Naive thymus-derived CD8-positive, alpha-beta T cell (primary cell): ENCODE measurements at regions of chr16 and their contacts with region 1.

Region 1: GRCh38 chr16:68237243-68238028 is 1.5 kb upstream of the ESRP2 start:
- DNase-seq: peak; percentile 70 to 90 (median 80)
- ATAC-seq: peak; percentile 70 to 71
- H3K4me3 Mint-ChIP-seq: peak overlapping the region; percentile 88 to 99 (median 96)
- H3K27ac Mint-ChIP-seq: peak overlapping the region; percentile 82 to 94 (median 92)
- H3K4me1 Mint-ChIP-seq: peaks cover 18 to 43% (median 39%) of the 10 kb centered on the region in 4 donors
- H3K27me3 Mint-ChIP-seq: no peaks in the 10 kb centered on the region

Region 2: GRCh38 chr16:68079626-68080344 is 157.7 kb before region 1 on chr16:
- POLR2A ChIA-PET with region 1: interaction called, 10 read pairs
- DNase-seq: peak; percentile 32 to 85 (median 68)
- ATAC-seq: peak; percentile 46 to 61
- H3K4me3 Mint-ChIP-seq: peak overlapping the region; percentile 66 to 86 (median 75)
- H3K27ac Mint-ChIP-seq: peak overlapping the region; percentile 86 to 97 (median 95)
- H3K4me1 Mint-ChIP-seq: peaks cover 57 to 92% (median 90%) of the 10 kb centered on the region in 4 donors
- H3K27me3 Mint-ChIP-seq: no peaks in the 10 kb centered on the region

Region 3: GRCh38 chr16:68202091-68202519 is 35.3 kb before region 1 on chr16:
- POLR2A ChIA-PET with region 1: no interaction called
- DNase-seq: no peak
- ATAC-seq: no peak
- H3K4me3 Mint-ChIP-seq: no peak overlapping the region
- H3K27ac Mint-ChIP-seq: peak overlapping the region in 7 of 10 donors; percentile 10 to 90 (median 71)
- H3K4me1 Mint-ChIP-seq: peaks cover 9 to 34% (median 17%) of the 10 kb centered on the region in 4 donors
- H3K27me3 Mint-ChIP-seq: no peaks in the 10 kb centered on the region